Stomach (tissue), 19 donors: ENCODE measurements at regions of chr2 and their contacts with region 1.

Region 1: DNA sequence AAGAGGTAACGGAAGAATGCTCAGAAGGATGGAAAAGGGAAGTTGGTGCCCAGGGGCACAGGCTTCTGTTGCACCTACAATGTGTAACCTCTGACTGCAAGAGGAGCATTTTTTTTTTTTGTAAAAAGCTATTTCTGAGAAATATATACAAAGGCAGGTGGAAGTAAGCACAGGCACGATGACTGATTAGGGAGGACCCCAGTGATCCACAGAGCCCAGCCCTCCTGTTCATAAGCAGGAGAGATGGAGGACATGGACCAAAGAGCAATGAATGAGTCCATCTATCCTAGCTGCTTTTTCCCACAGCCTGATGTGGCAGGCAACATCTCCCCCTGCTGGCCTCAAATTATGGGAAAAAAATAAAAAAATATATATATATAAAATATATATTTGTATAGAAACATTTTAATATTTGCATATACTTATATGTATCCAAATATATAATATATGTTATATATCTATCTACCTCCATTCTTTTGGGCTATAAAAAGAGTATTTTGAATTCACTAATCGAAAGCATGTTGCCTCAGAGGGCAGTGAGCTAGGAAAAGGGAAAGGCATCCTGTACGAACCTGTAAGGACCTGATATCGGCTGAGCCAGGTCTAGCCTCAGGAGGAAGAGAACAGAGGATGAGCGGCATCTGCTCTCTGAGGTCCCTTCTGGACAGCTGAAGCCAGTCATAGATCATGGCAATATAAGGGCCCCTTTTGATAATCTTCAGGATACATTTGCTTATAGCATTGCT is 166.0 kb upstream of the STK17B start:
- DNase-seq: peak in 1 of 2 donors; percentile 57
- H3K4me3 ChIP-seq: no peak overlapping the region
- H3K27ac ChIP-seq: no peak overlapping the region
- H3K4me1 ChIP-seq: no peaks in the 10 kb centered on the region
- H3K27me3 ChIP-seq: no peaks in the 10 kb centered on the region
- CTCF ChIP-seq: peak in 2 of 7 experiments; percentile 39 to 46
- EP300 ChIP-seq: no peak
- POLR2A ChIP-seq: no peak

Region 2: DNA sequence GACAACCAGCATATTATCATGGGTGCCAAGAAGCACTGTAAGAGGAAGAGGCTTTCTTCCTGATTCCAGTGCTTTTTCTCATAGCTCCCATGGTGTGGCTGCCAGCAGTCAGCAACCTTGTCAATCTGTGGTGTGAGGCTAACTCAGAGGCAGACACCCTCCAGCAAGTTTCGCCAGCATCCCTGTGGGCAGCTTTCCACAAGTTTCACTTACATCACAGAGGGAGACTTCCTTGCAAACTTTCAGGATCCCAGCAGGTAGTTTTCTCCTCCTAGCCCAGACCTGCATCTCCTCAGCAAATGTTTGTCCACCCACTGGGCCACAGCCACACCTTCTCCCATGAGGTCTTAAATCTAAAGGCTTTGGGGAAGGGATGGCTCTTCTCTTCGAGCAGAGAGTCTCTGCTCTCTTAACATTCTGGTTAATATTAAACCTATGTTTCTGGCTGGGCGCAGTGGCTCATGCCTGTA is 277.9 kb before region 1 on chr2:
- intact Hi-C with region 1: no loop called
- DNase-seq: no peak
- H3K4me3 ChIP-seq: no peak overlapping the region
- H3K27ac ChIP-seq: no peak overlapping the region
- H3K4me1 ChIP-seq: no peaks in the 10 kb centered on the region
- H3K27me3 ChIP-seq: no peaks in the 10 kb centered on the region
- CTCF ChIP-seq: no peak
- EP300 ChIP-seq: no peak
- POLR2A ChIP-seq: no peak

Region 3: DNA sequence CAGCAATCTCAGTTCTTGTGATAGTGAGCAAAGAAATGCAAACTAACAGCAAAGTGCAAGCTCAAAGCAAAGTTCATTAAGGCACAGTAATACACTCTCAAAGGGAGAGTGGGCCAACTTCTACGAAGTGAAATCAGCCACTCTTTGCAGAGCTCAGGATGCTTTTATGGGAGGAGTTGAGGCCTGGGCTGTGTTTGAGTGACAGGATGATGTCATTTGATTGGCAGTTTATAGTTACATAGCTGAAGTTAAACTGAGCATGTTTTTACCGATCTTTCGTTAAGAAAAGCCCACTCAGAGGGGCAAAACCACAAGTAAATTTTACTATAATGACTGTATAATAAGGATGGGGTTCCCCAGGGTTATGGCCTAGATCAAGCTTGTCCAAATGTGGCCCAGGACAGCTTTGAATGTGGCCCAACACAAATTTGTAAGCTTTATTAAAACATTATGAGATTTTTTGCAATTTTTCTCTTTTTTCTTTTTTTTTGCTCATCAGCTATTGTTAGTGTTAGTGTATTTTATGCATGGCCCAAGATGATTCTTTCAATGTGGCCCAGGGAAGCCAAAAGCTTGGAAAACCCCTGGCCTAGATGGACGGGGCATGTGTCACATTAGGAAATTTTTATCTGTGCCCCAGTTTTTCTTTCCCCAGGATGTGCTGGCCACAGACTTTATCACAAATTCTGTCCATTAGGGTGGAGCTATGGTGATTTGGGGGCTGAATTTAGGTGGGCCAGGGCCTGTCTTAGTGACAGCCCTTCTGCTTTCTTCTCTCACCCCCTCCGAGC is 260.4 kb before region 1 on chr2:
- intact Hi-C with region 1: loop called (anchors 10 kb)
- DNase-seq: no peak
- H3K4me3 ChIP-seq: no peak overlapping the region
- H3K27ac ChIP-seq: no peak overlapping the region
- H3K4me1 ChIP-seq: peaks cover 0 to 18% (median 7%) of the 10 kb centered on the region in 4 donors
- H3K27me3 ChIP-seq: no peaks in the 10 kb centered on the region
- CTCF ChIP-seq: no peak
- EP300 ChIP-seq: no peak
- POLR2A ChIP-seq: no peak